Activated CD4-positive, alpha-beta memory T cell treated with anti-CD3 and anti-CD28 coated beads for 36 hours (primary cell): ENCODE measurements at regions of chr4 and their contacts with region 1.

Region 1: DNA sequence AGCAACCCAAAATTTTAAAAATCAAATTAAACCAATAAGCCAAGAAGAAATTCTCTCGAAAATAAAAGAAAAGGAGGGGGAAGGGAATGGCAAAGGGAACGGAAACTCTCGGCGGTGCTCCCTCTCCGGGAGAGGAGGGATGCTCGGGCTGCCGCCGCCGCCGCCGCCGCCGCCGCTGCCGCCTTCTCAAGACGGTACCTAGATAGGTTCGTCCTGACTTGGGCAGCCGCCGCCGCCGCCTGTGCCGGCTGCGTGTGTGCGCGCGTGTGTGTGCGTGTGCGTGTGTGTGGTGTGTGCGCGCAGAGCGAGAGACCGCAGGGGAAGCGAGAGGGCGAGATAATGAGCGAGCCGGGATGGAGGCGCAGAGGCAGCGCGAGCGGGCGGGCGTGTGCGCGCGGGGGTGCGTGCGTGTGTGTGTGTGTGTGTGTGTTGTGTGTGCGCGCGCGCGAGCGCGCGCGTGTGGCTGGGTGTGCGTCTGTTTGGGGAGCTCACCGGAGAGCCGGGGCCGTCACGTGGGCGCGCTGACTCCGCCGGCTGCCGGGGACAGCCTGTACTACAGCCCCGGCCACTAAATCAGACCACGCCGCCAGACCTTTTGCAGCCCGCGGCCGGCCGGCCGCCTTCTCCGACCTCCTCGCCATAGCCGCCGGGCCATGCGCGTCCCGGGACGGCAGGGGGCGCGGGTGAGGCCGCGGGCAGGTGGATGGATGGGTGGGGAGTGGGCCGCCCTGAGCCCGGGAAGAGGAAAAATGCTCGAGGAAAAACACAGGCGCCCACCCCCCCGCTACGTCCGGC is 111.6 kb downstream of the DHX15 start:
- DNase-seq: peak; percentile 73
- H3K4me3 Mint-ChIP-seq: peak overlapping the region; percentile 79
- H3K27ac Mint-ChIP-seq: no peak overlapping the region
- H3K4me1 Mint-ChIP-seq: peaks cover 25% of the 10 kb centered on the region
- H3K27me3 Mint-ChIP-seq: peaks cover 47% of the 10 kb centered on the region

Region 2: DNA sequence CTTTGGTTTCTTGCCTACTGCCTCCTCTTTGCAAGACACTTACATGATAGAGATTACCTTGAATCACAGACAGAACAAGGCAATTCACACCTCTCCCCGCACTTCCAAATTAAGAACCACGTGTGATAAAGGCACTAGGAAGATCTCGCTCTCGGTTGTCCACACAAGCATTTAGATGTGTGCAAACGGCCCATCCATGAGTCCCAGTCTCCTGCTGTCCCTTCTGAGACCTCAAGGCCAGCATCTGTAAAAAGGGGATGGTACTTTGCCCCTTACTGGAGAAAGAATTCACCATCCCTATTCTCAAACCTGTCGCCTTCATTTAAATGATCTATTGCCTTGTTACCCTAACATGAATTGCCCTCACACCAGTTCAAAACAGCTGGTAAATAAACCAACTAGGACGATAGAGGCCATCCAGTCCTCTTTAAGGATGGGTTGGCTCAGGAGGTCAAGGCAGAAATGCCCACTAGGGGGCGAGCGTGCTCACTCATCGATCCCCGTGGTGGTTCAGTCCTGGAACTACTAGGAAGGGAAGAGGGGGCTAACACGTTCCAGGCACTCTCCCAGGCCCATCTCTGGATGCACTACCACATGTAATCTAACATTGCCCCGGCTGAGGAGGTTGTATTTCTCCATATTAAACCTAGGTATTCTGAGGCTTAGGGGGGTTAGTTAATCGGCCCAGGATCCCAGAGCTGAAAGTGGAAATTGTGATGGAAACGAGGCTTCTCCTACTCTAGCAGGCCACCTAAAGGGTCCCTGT is 15.9 kb after region 1 on chr4:
- CTCF ChIA-PET with region 1: interaction called, 14 read pairs
- POLR2A ChIA-PET with region 1: no interaction called
- intact Hi-C with region 1: no loop called
- DNase-seq: peak; percentile 77
- H3K4me3 Mint-ChIP-seq: no peak overlapping the region
- H3K27ac Mint-ChIP-seq: no peak overlapping the region
- H3K4me1 Mint-ChIP-seq: peaks cover 3% of the 10 kb centered on the region
- H3K27me3 Mint-ChIP-seq: peaks cover 17% of the 10 kb centered on the region